Tibial artery (tissue), 4 donors: ENCODE measurements at regions of chr7 and their contacts with region 1.

Region 1: GRCh38 chr7:26864309-26865093 is at the start of gene SKAP2:
- DNase-seq: peak; percentile 97 to 99
- H3K4me3 ChIP-seq: peak within 1 kb of the TSS; percentile 66 to 72
- H3K27ac ChIP-seq: peak within 1 kb of the TSS; percentile 85 to 86
- H3K4me1 ChIP-seq: peaks cover 0 to 10% (median 0%) of the 10 kb centered on the region in 4 donors
- H3K27me3 ChIP-seq: peaks cover 0 to 19% of the 10 kb centered on the region in 2 donors
- CTCF ChIP-seq: no peak

Region 2: GRCh38 chr7:25862260-25863037 is 1002.1 kb before region 1 on chr7:
- intact Hi-C with region 1: loop called (anchors 5 kb)
- DNase-seq: peak; percentile 95 to 99
- H3K4me3 ChIP-seq: peak overlapping the region; percentile 17 to 30
- H3K27ac ChIP-seq: peak overlapping the region in 1 of 2 donors; percentile 5
- H3K4me1 ChIP-seq: peaks cover 0 to 12% (median 3%) of the 10 kb centered on the region in 4 donors
- H3K27me3 ChIP-seq: peaks cover 10 to 70% of the 10 kb centered on the region in 2 donors
- CTCF ChIP-seq: no peak

Region 3: DNA sequence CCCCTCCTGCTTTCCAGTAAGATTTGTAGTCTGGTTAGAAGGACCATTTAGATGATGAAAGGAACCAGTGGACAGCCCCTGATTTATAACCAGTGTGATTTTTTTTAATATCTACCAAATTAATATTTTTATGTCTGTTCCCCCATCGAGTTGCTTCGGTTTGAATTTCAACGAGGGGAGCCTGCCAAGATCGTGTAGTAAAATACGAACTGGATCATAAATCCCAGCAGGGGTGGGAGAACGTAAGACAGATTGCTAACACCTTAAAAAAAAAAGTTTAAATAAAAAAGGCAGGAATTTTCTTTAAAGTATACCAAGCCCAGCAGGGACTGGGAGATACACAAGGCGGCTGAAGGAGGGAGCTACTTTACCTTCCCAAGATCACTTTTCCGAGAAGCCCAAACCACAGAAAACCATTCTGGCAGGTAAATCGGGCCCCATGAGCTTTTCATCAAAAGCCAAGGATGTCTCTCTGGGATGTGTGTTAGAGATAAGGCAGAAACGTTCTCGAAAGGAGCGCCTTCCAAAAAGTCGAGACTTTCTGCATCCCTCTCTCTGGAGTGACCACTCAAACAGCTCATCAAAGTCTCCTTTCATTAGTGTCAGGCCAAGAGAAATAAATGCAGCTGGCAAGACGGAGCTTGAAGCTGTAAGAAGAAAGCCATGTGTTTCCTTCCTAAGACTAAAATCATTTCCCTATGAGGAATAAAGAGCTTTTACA is 983.0 kb before region 1 on chr7:
- intact Hi-C with region 1: loop called (anchors 5 kb)
- DNase-seq: no peak
- H3K4me3 ChIP-seq: no peak overlapping the region
- H3K27ac ChIP-seq: no peak overlapping the region
- H3K4me1 ChIP-seq: no peaks in the 10 kb centered on the region
- H3K27me3 ChIP-seq: peaks cover 0 to 92% of the 10 kb centered on the region in 2 donors
- CTCF ChIP-seq: no peak

Region 4: DNA sequence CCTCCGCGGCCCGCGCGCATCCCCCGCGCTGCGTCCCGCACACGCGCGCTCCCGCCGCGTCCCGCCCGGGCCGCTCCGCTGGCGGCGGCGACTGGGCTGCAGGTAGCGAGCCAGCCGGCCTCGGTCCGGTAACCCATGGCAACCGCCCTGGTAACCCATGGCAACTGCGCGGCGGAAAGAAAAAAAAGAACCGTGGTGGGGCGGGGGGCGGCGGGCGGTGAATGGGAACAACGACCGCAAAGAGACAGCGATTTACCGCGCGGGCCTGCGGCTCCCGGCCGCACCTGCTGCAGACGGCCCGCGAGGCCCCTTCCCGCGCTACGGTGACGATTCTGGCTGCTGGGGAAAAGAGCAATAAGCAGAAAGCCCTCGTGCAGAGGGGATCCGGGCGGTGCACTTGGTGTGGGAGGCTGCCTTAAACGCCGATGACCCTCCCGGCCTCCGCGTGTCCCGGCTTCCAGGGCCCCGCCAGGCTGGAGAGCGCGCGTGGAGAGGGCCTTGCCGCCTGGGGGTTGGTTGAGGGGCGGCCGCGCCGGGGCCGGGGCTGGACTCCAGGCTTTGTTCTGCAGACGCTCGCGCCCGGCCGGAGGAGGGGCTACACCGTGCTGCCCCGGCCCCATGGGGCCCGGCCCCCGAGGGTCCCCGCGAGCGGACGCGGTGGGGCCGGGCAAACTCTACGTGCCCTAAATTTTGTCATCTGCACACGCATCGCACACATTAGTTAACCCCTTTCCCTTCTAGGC is 488.2 kb before region 1 on chr7:
- intact Hi-C with region 1: loop called (anchors 10 kb)
- DNase-seq: no peak
- H3K4me3 ChIP-seq: peak overlapping the region; percentile 28 to 35
- H3K27ac ChIP-seq: no peak overlapping the region
- H3K4me1 ChIP-seq: peaks cover 0 to 12% (median 9%) of the 10 kb centered on the region in 4 donors
- H3K27me3 ChIP-seq: peaks cover 3 to 92% of the 10 kb centered on the region in 2 donors
- CTCF ChIP-seq: no peak

Region 5: GRCh38 chr7:27160546-27161213 is 296.2 kb after region 1 on chr7:
- intact Hi-C with region 1: loop called (anchors 5 kb)
- DNase-seq: peak; percentile 90
- H3K4me3 ChIP-seq: peak overlapping the region; percentile 68 to 91
- H3K27ac ChIP-seq: peak overlapping the region; percentile 82 to 96
- H3K4me1 ChIP-seq: peaks cover 0 to 43% (median 17%) of the 10 kb centered on the region in 4 donors
- H3K27me3 ChIP-seq: no peaks in the 10 kb centered on the region
- CTCF ChIP-seq: peak; percentile 98 to 99